Vagina (tissue), 2 donors: ENCODE measurements at regions of chr6 and their contacts with region 1.

Region 1: GRCh38 chr6:17877196-17877889 is 110.1 kb downstream of the KIF13A start:
- DNase-seq: no peak
- H3K4me3 ChIP-seq: no peak overlapping the region
- H3K27ac ChIP-seq: no peak overlapping the region
- H3K4me1 ChIP-seq: peaks cover 42% of the 10 kb centered on the region
- H3K27me3 ChIP-seq: no peaks in the 10 kb centered on the region
- CTCF ChIP-seq: no peak
- POLR2A ChIP-seq: no peak

Region 2: DNA sequence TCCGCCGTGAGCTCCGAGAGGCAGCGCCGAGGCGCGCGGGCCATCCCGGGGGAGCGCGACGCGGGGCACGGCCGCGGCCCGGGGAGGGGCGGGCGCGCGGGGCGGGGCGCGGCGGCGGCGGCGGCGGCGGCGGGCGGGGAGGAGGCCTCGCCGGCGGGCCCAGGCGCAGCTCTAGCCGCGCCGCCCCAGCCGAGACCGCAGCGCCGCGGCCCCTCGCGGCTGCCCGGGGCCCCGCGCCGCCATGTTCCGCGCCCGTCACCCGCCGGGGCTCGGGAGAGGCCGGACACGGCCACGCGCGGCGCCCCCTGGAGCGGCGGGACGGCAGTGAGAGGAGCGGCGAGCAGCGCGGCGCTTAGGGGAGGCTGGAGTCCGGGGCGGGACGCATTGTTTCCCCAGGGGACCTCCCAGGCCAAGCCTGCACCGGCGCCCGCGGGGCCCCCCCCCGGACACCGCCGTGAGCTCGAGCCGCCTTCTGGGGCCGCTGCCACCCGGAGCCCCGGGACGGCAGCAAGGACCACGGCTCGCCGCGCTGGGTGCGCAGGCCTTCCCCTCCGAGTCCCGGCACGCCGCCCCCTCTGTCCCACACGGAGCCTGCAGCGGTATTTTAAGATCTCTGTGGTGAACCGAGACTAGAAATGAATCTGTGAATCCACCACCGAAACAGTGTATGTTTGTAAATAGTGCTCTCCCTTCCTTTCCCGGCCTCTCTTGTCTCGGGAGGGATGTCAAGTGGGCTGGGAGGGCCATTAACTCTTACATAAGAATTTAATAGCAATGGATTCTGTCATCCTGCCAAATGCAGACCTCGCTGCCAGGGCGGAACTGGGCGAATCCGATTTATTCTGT is 110.5 kb after region 1 on chr6 and contains the start of gene KIF13A:
- intact Hi-C with region 1: loop called (anchors 10 kb)
- DNase-seq: peak in 1 of 2 donors; percentile 86
- H3K4me3 ChIP-seq: peak within 1 kb of the TSS; percentile 81 to 82
- H3K27ac ChIP-seq: peak within 1 kb of the TSS; percentile 96
- H3K4me1 ChIP-seq: peaks cover 43% of the 10 kb centered on the region
- H3K27me3 ChIP-seq: no peaks in the 10 kb centered on the region
- CTCF ChIP-seq: no peak
- POLR2A ChIP-seq: no peak
- total RNA-seq, gene KIF13A: 43.0 TPM